Right ventricle myocardium inferior (tissue), 1 donor: ENCODE measurements at regions of chr1 and their contacts with region 1.

Region 1: GRCh38 chr1:74468982-74469603 is 43.3 kb downstream of the LRRC53 start:
- DNase-seq: no peak
- ATAC-seq: peak; percentile 41

Region 2: GRCh38 chr1:74197657-74198552 is 271.2 kb before region 1 on chr1 and contains the starts of genes FPGT and LRRIQ3:
- intact Hi-C with region 1: loop called (anchors 5 kb)
- DNase-seq: peak; percentile 97
- ATAC-seq: peak; percentile 100
- total RNA-seq, gene FPGT: 11.6 TPM
- total RNA-seq, gene LRRIQ3: 0.49 TPM

Region 3: DNA sequence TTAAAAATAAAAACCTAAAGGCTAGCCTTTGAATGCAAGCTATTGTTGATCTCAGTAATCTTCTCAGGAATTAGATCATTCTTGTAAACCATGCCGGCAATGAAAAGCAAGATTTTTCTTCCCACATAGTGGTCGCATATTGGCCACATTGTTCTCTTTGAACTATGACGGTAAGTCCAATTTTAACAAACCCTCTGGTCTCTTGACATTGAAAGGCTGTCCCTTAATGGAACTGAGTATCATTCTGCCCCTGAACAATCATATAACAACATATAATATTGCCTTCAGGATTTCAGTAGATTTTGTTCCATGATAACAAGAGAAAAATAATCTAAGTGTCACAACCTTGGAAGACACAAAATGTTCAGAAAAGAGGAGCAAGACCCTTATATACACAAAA is 232.7 kb before region 1 on chr1:
- intact Hi-C with region 1: loop called (anchors 10 kb)
- DNase-seq: no peak
- ATAC-seq: no peak

Region 4: DNA sequence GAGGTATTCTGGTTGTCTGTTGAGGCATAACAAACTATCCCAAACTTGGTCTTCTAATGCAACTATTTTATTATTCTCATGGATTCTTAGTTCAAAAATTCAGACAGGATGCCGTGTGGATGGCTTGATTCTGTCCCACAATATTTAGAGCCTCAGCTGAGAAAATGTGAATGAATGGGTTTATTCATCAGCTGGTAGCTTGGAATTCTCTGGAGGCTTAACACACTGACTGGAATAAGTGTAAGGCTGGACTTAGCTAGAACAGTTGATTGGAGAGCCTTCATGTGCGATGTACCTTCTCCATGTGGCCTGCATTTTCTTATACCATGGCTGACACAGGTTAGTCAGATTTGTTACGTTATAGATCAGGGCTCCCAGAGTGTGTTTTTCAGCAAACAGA is 203.1 kb before region 1 on chr1:
- intact Hi-C with region 1: loop called (anchors 10 kb)
- DNase-seq: no peak
- ATAC-seq: no peak

Region 5: GRCh38 chr1:74363220-74363619 is 105.9 kb before region 1 on chr1:
- intact Hi-C with region 1: loop called (anchors 5 kb)
- DNase-seq: no peak
- ATAC-seq: peak; percentile 95

Region 6: DNA sequence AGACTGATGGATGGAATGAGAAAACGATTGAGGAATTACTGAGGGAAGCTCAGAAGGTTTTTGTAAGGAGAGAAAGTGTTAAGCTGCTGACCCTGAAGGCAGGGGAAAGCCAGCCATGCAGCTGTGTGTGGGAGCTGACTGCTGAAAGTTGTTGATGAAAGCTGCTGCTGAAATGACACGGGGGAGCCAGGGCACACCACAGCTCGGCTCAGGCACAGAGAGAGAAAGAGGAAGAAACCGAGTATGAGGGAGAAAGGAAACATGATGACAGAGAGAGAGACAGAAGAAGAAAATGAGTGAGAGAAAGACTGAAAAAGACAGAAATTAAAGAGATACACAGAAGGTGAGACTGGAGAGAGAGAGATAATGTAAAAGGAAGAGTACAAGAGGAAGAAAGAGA is 72.2 kb before region 1 on chr1:
- intact Hi-C with region 1: loop called (anchors 5 kb)
- DNase-seq: no peak
- ATAC-seq: peak; percentile 58

Region 7: GRCh38 chr1:74430342-74430934 is 38.7 kb before region 1 on chr1:
- intact Hi-C with region 1: loop called (anchors 5 kb)
- DNase-seq: no peak
- ATAC-seq: no peak

Region 8: DNA sequence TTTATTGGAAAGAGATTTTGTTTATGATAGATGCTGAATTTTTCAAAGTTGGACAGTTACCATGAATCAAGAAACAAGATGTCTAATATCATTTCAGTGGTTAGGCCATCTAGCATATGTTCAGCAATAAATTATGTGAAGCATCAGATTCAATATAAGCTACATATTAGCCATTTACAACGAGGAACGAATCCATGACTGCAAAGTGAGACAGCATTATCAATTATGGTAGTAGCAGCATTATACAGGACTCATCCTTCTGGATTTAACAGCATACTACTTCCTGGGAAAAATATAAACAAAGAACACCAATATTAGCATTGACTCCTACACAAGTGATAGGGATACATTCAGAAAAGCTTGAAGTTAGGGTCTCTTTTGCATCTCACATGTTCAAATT is 15.8 kb before region 1 on chr1:
- intact Hi-C with region 1: no loop called
- DNase-seq: no peak
- ATAC-seq: no peak

Region 9: GRCh38 chr1:74534241-74534640 is 65.1 kb after region 1 on chr1:
- intact Hi-C with region 1: no loop called
- DNase-seq: no peak
- ATAC-seq: no peak